ENCODE measurements at regions of chr9 and their contacts with region 1.

Region 1: DNA sequence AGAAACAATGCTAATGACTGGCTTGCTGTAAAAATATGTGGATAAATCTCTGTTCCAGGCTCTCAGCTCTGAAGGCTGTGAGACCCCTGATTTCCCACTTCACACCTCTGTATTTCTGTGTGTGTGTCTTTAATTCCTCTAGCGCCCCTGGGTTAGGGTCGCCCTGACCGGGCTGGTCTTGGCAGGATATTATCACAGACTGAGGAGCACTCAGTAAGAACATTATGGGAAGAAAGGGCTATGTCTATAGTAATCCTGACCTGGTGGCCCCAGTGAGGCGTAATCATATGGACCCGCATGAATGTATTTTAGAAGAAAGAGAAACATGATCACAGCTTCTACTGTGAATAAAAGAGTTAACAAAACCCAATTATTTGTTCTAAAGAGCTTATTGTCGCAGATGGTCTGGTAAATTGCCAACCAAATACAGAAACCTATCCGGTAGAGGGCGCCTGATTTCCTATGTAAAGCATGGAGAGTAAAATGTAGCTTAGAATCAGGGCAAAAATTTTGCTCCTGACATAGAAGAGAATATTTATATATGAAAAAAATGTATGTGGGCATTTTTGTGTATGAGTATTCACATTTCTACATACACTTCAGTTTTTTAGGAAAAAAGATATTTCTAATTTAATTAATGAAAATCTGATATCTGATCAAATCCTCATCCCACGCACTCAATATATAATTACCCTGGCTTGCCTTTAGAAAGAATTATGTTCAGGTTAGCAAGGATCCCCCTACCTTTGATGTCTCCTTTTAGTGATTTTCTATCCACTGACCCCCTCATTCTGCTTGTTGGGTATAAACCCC is 5.8 kb upstream of the IFNA1 start:
- DNase-seq: peak; percentile 63
- ATAC-seq: peak; percentile 79
- H3K4me3 ChIP-seq: no peak overlapping the region
- H3K27ac ChIP-seq: no peak overlapping the region
- H3K4me1 ChIP-seq: no peaks in the 10 kb centered on the region
- H3K27me3 ChIP-seq: no peaks in the 10 kb centered on the region
- CTCF ChIP-seq: peak; percentile 58 to 71 (median 66); a peak in 5 of 6 replicates
- POLR2A ChIP-seq: no peak
- RAD21 ChIP-seq: peak; percentile 55

Region 2: DNA sequence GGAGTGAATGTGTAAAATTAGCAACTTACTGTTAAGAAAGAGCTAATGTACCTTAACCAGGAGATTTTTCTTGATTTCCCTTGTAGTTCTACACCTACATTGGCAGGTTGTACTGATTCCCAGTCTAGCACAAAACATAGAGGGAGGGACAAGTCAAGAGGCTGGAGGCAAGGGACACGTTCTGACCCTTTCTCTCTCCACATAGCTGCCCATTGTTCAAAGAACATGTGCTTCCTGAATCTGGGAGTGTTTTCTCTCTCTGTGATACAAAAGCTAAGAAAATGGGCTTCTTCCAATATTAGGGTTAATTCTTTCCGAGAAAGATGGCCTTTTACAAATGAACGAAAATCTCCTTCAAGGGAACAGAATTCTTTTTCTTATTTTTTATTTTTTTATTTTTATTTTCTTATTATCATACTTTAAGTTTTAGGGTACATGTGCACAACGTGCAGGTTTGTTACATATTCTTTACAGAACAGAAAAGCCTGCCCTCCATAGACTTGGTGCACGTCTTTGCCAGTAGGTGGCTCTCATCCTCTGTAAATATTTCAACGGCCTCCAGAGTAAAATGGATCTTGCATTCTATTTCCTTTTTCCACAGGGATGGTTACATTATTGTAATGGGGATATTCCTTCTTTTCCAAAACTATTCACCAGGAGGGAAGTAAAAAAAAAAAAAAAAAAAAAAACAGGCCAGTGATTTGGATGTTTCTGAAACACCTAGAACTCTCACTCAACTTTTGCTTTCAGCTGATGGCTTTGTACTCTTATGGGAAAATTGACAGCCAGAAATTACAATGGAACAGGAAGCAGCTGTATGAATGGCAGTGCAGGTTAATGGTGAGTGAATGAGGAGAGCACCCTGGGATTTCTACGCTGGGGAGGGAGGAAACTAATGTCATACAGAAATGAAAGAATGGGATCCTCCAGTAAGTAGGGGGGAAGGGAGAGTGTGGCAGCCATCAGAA is 116.2 kb before region 1 on chr9:
- CTCF ChIA-PET with region 1: interaction called, 12 read pairs
- POLR2A ChIA-PET with region 1: no interaction called
- RAD21 ChIA-PET with region 1: no interaction called
- intact Hi-C with region 1: no loop called
- DNase-seq: no peak
- ATAC-seq: peak; percentile 89
- H3K4me3 ChIP-seq: no peak overlapping the region
- H3K27ac ChIP-seq: no peak overlapping the region
- H3K4me1 ChIP-seq: peaks cover 3 to 10% of the 10 kb centered on the region in 2 experiments; a peak in 3 of 4 replicates
- H3K27me3 ChIP-seq: no peaks in the 10 kb centered on the region
- CTCF ChIP-seq: peak; percentile 54 to 68 (median 63); a peak in 5 of 6 replicates
- POLR2A ChIP-seq: no peak
- RAD21 ChIP-seq: peak; percentile 69

Region 3: GRCh38 chr9:21334701-21335632 is 99.4 kb before region 1 on chr9 and contains the start of gene KLHL9:
- CTCF ChIA-PET with region 1: interaction called, 14 read pairs
- POLR2A ChIA-PET with region 1: no interaction called
- RAD21 ChIA-PET with region 1: no interaction called
- intact Hi-C with region 1: no loop called
- DNase-seq: peak; percentile 83
- ATAC-seq: peak; percentile 96
- H3K4me3 ChIP-seq: peak within 1 kb of the TSS; percentile 85 to 98
- H3K27ac ChIP-seq: peak within 1 kb of the TSS; percentile 82
- H3K4me1 ChIP-seq: peaks cover 3 to 23% of the 10 kb centered on the region in 2 experiments; a peak in 3 of 4 replicates
- H3K27me3 ChIP-seq: no peaks in the 10 kb centered on the region
- CTCF ChIP-seq: no peak
- POLR2A ChIP-seq: peak; percentile 46
- RAD21 ChIP-seq: no peak
- total RNA-seq, gene KLHL9: 16.4 TPM

Region 4: DNA sequence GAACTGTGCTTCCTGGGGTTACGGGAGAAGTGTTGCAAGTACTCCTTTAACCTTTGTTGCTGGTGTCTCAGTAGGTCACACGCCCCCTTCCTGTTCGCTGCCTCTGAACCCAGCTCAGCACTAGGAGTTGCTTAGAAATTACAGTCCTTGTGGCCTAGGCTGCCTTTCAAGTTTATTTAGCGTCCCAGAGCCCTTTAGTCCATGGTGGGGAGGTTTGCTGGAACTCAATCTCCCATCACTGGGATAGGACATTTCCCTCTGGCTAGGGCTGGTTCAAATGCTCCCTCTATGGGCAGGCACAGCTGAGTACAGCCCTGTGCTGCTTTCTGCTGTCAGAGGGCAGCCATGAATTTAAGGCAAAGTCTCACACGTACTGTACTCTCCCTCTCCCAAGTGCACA is 20.8 kb before region 1 on chr9:
- CTCF ChIA-PET with region 1: interaction called, 17 read pairs
- POLR2A ChIA-PET with region 1: no interaction called
- RAD21 ChIA-PET with region 1: no interaction called
- intact Hi-C with region 1: no loop called
- DNase-seq: no peak
- ATAC-seq: peak; percentile 90
- H3K4me3 ChIP-seq: no peak overlapping the region
- H3K27ac ChIP-seq: no peak overlapping the region
- H3K4me1 ChIP-seq: peaks cover 0 to 8% of the 10 kb centered on the region in 2 experiments; a peak in 2 of 4 replicates
- H3K27me3 ChIP-seq: no peaks in the 10 kb centered on the region
- CTCF ChIP-seq: peak; percentile 29 to 62 (median 49); a peak in 5 of 6 replicates
- POLR2A ChIP-seq: no peak
- RAD21 ChIP-seq: peak; percentile 47

Region 5: DNA sequence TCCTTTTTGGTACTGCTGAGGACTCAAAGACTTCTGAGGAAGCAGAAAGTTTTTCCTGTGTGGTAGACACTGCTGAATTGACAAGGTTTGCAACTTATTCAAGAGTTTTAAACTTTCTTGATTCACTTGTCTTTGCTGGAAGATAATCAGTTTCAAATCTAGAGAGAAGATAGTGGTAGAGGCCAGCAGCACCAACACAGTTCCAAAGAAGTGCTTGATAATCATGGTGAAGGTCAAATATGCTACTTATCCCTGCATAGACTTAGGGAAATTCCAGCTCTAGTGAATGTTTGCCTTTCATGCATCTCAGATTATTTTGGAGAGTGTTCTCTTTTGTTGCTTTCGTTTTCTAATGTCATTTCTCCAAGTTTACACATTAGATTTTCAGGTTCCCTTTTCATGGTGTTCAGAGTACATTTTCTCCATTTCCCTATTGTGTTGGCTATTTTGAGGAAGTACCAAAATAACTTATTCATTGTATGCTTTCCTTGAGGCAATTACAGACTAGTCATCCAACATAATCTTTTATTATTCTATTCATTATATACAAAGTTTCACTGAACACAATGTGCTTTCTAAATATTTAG is 47.2 kb after region 1 on chr9:
- CTCF ChIA-PET with region 1: no interaction called
- POLR2A ChIA-PET with region 1: no interaction called
- RAD21 ChIA-PET with region 1: no interaction called
- intact Hi-C with region 1: no loop called
- DNase-seq: no peak
- ATAC-seq: no peak
- H3K4me3 ChIP-seq: no peak overlapping the region
- H3K27ac ChIP-seq: no peak overlapping the region
- H3K4me1 ChIP-seq: no peaks in the 10 kb centered on the region
- H3K27me3 ChIP-seq: no peaks in the 10 kb centered on the region
- CTCF ChIP-seq: no peak
- POLR2A ChIP-seq: no peak
- RAD21 ChIP-seq: no peak

Region 6: DNA sequence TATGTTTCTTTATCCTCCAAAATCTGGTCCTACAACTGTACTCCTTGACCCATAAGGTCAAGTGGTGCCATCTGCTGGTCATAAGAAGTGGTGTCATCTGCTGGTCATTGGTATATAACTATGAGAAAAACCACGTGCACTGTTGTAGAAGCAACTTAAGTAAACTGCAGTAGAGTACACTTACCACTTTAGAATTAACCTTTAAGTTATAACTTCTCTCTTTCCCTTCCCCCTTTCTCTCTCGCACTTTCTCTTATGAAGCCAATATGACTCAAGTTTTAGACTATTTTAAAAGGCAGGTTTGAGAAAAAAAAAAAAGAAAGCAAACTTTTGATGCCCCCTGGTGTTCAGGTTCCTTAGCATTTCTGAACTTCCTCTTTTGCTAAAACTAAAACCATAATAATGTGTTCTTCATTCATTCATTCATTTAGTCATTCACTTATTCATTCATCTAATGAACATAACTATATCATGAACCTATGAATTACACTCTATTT is 355.2 kb after region 1 on chr9:
- CTCF ChIA-PET with region 1: interaction called, 11 read pairs
- POLR2A ChIA-PET with region 1: no interaction called
- RAD21 ChIA-PET with region 1: no interaction called
- intact Hi-C with region 1: no loop called
- DNase-seq: peak; percentile 92
- ATAC-seq: peak; percentile 76
- H3K4me3 ChIP-seq: no peak overlapping the region
- H3K27ac ChIP-seq: peak overlapping the region; percentile 97
- H3K4me1 ChIP-seq: peaks cover 28 to 57% of the 10 kb centered on the region in 2 experiments
- H3K27me3 ChIP-seq: no peaks in the 10 kb centered on the region
- CTCF ChIP-seq: peak; percentile 50 to 96 (median 85)
- POLR2A ChIP-seq: no peak
- RAD21 ChIP-seq: peak; percentile 91

Region 7: DNA sequence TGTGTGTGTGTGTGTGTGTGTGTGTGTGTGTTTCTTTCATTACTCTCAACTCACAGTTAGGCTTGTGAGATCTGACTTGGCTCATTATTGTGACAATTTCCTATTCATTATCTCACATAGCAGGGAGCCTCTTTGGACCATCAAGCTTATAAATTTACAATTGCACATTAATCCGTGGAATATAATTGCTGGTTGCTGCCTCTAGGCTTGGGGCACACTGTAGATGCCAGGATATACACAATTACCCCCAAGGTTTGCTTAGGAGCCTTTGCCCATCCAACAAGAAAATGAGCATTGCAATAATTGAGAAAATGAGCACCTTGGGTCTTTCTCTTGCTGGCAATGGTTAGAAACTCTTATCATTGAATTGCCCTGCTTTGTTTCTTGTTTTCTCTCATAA is 850.7 kb after region 1 on chr9:
- CTCF ChIA-PET with region 1: no interaction called
- POLR2A ChIA-PET with region 1: no interaction called
- RAD21 ChIA-PET with region 1: no interaction called
- intact Hi-C with region 1: no loop called
- DNase-seq: no peak
- ATAC-seq: no peak
- H3K4me3 ChIP-seq: no peak overlapping the region
- H3K27ac ChIP-seq: no peak overlapping the region
- H3K4me1 ChIP-seq: no peaks in the 10 kb centered on the region
- H3K27me3 ChIP-seq: no peaks in the 10 kb centered on the region
- CTCF ChIP-seq: no peak
- POLR2A ChIP-seq: no peak
- RAD21 ChIP-seq: no peak

Measured in HCT116 (cell line).